SK-N-SH (cell line): ENCODE measurements at regions of chr11 and their contacts with region 1.

Region 1: DNA sequence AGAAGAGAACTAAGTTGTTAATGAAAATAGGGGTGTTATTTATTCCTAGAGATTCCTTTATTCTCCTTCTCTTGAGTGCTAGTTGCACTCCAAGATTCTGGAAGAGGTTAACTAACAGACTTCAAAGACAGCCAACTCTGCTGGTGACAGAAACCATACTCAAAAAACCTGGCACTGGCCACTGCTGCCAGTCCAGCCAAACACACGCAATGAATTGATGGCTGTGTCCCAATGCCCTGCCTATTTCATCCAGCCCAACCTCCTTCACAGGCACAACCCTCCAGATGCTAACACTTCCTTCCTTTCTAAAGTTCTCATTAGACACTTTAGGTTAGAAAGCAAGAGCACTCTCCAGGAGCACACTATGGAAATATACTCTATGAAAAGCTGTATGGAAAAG is 150.8 kb upstream of the C11orf58 start:
- DNase-seq: no peak
- H3K4me3 ChIP-seq: no peak overlapping the region
- H3K27ac ChIP-seq: no peak overlapping the region
- H3K4me1 ChIP-seq: peaks cover 0 to 2% of the 10 kb centered on the region in 2 experiments; a peak in 1 of 4 replicates
- H3K27me3 ChIP-seq: no peaks in the 10 kb centered on the region
- CTCF ChIP-seq: no peak
- EP300 ChIP-seq: no peak
- RAD21 ChIP-seq: no peak

Region 2: DNA sequence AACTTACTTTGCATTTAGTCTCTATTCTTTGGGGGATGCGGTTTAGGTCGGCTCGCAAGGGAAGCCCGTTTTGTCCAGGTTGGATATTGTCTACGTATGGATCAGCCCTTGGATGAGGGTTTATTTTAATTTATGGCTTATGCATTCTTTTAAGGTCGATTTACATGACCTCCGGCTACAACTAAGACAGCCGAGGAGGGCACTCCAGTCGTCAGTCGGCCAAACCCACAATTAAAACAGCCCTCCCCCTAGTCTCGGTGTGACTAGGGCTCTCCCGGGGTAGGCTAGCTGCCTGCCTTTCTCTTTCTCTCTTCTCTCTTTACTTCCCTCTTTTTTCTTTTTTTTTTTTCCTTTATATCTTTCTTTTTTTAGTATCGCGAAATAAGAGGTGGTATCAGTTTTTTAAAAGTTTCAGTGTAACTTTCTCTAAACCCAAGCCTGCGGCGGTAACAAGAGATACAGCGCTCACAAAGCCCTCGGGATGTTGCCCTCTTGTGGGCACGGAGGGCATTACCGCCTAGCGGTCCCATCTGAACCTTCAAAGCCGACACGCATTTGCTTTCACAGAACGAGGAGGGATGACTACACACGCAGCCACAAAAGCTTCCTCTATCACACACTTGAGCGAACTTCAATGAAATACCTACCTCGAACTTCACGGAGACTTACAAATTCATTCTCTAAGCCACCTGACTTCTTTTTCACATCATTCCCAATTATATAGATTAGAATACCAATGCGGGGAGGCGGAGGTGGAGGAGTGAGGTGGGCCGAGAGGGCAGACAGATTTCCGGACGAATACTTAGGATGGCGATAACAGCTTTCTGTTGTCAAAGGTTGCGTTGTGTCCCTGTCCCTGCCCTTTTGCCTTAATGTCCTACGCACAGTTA is 18.5 kb after region 1 on chr11:
- CTCF ChIA-PET with region 1: interaction called, 22 read pairs
- POLR2A ChIA-PET with region 1: no interaction called
- DNase-seq: peak; percentile 85
- H3K4me3 ChIP-seq: peak overlapping the region; percentile 62 to 73
- H3K27ac ChIP-seq: peak overlapping the region in 1 of 2 experiments; percentile 44; a peak in 2 of 4 replicates
- H3K4me1 ChIP-seq: peaks cover 0 to 19% of the 10 kb centered on the region in 2 experiments; a peak in 2 of 4 replicates
- H3K27me3 ChIP-seq: peaks cover 47% of the 10 kb centered on the region
- CTCF ChIP-seq: peak; percentile 98
- EP300 ChIP-seq: no peak
- RAD21 ChIP-seq: peak; percentile 81